Heart right ventricle (tissue), 16 donors: ENCODE measurements at regions of chr1 and their contacts with region 1.

Region 1: GRCh38 chr1:26768755-26769154 is 19.0 kb upstream of the PIGV start:
- DNase-seq: peak in 1 of 2 donors; percentile 59
- ATAC-seq: peak in 6 of 8 donors; percentile 33 to 67 (median 62)
- H3K4me3 ChIP-seq: no peak overlapping the region
- H3K27ac ChIP-seq: peak overlapping the region in 5 of 10 donors; percentile 17 to 67 (median 41)
- H3K4me1 ChIP-seq: peaks cover 3 to 50% (median 38%) of the 10 kb centered on the region in 9 donors
- H3K27me3 ChIP-seq: no peaks in the 10 kb centered on the region
- CTCF ChIP-seq: no peak

Region 2: GRCh38 chr1:26733982-26734381 is 34.8 kb before region 1 on chr1:
- intact Hi-C with region 1: loop called in 1 of 10 experiments (anchors 5 kb)
- DNase-seq: no peak
- ATAC-seq: peak in 1 of 8 donors; percentile 15
- H3K4me3 ChIP-seq: no peak overlapping the region
- H3K27ac ChIP-seq: peak overlapping the region in 1 of 10 donors; percentile 31
- H3K4me1 ChIP-seq: peaks cover 0 to 63% (median 44%) of the 10 kb centered on the region in 9 donors
- H3K27me3 ChIP-seq: no peaks in the 10 kb centered on the region
- CTCF ChIP-seq: no peak